Tibial artery (tissue), 4 donors: ENCODE measurements at regions of chr6 and their contacts with region 1.

Region 1: GRCh38 chr6:109964949-109965348 is 13.2 kb upstream of the GPR6 start:
- DNase-seq: no peak
- H3K4me3 ChIP-seq: no peak overlapping the region
- H3K27ac ChIP-seq: no peak overlapping the region
- H3K4me1 ChIP-seq: no peaks in the 10 kb centered on the region
- H3K27me3 ChIP-seq: peaks cover 0 to 3% of the 10 kb centered on the region in 2 donors
- CTCF ChIP-seq: no peak

Region 2: GRCh38 chr6:108883172-108883571 is 1081.8 kb before region 1 on chr6:
- intact Hi-C with region 1: no loop called
- DNase-seq: no peak
- H3K4me3 ChIP-seq: no peak overlapping the region
- H3K27ac ChIP-seq: no peak overlapping the region
- H3K4me1 ChIP-seq: peaks cover 0 to 10% (median 4%) of the 10 kb centered on the region in 4 donors
- H3K27me3 ChIP-seq: no peaks in the 10 kb centered on the region
- CTCF ChIP-seq: no peak

Region 3: GRCh38 chr6:109632405-109632804 is 332.5 kb before region 1 on chr6:
- intact Hi-C with region 1: loop called (anchors 5 kb)
- DNase-seq: no peak
- H3K4me3 ChIP-seq: no peak overlapping the region
- H3K27ac ChIP-seq: no peak overlapping the region
- H3K4me1 ChIP-seq: no peaks in the 10 kb centered on the region
- H3K27me3 ChIP-seq: no peaks in the 10 kb centered on the region
- CTCF ChIP-seq: no peak